Endothelial cell of umbilical vein (primary cell): ENCODE measurements at regions of chr15 and their contacts with region 1.

Region 1: GRCh38 chr15:78979456-78980320 is 34.8 kb upstream of the CTSH start:
- DNase-seq: peak; percentile 60
- H3K4me3 ChIP-seq: no peak overlapping the region
- H3K27ac ChIP-seq: no peak overlapping the region
- H3K4me1 ChIP-seq: no peaks in the 10 kb centered on the region
- H3K27me3 ChIP-seq: peaks cover 0 to 2% of the 10 kb centered on the region in 2 experiments
- CTCF ChIP-seq: peak; percentile 67 to 77
- POLR2A ChIP-seq: no peak

Region 2: DNA sequence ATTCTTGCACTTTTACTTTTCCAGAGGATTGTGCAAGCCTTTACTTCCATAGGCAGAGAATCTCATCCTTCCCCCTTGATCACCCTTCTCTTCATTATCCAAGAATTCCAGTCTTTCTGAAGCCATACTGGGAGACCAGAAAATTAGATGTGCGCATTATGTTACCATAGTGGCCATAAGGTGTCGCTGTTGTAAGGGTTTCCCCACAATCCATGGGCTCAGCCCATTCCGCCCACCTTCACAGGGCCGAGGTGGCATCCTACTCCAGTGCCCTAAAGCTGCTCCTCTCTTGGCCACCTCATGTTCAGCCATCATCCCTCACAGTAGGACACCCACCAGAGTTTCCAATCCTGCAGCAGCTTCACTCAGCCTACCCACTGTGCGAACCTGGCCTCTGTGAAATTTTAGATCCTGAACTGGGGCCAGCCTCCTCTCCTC is 69.9 kb before region 1 on chr15:
- CTCF ChIA-PET with region 1: interaction called, 60 read pairs
- POLR2A ChIA-PET with region 1: no interaction called
- dilution Hi-C with region 1: no loop called
- intact Hi-C with region 1: loop called (anchors 1 kb)
- DNase-seq: peak; percentile 52
- H3K4me3 ChIP-seq: no peak overlapping the region
- H3K27ac ChIP-seq: no peak overlapping the region
- H3K4me1 ChIP-seq: no peaks in the 10 kb centered on the region
- H3K27me3 ChIP-seq: no peaks in the 10 kb centered on the region
- CTCF ChIP-seq: peak; percentile 61 to 65
- POLR2A ChIP-seq: no peak

Region 3: DNA sequence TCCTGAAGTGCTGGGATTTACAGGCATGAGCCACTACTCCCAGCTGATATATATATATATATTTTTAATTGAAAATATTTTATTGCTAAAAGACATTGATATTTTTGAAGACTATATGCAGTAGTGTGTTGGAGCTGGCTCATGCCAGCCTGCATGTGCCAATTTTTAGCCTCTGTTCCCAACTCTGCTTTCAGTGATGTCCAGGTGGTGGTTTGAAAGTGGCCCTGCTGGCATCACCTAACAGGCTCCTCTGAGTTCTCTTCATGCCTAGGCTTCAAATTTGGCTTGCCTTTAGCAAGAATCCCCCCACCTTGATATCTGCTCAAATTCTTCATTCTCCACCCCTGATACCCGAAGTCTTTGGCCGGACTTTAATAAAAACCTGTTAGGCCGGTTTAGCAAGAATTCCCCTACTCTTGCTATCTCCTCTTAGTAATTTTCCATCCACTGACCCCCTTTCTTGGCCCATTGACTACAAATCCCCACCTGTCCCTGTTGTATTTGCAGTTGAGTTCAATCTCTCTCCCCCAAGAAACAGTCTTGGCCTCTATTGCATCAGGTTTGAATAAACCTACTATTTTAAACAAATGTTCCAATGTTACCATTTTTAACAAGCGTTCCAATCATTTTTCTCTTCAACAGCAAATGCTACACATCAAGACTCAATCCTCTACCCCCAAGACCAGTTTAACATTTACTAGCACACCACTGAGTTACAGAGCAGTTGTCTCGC is 11.0 kb before region 1 on chr15:
- CTCF ChIA-PET with region 1: interaction called, 11 read pairs
- POLR2A ChIA-PET with region 1: no interaction called
- dilution Hi-C with region 1: no loop called
- intact Hi-C with region 1: no loop called
- DNase-seq: no peak
- H3K4me3 ChIP-seq: no peak overlapping the region
- H3K27ac ChIP-seq: no peak overlapping the region
- H3K4me1 ChIP-seq: no peaks in the 10 kb centered on the region
- H3K27me3 ChIP-seq: no peaks in the 10 kb centered on the region
- CTCF ChIP-seq: no peak
- POLR2A ChIP-seq: no peak

Region 4: DNA sequence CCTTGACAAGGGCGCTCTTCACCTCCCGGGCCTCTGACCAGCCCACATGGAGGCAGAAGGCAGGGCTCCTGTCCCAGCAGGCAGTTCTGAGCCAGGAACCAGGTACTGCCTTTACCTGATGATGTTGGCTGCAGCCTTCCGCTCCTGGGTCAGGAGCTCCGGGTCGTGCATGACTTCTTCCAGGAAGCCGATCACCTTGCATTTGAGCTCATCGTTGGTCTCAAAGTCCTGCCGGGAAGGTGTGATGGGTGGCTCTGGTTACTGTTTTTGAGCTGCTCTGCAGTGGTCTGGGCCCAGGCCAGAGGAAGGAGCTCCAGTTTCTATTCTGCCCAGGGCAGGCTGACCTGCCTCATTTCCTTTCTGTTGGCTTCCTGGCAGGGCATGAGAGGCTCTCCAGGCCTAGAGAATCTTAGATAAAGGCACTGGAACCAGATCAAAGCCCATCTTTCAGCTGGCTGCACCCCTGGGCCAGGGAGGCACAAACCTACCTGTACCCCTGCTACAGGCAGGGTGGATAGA is 18.4 kb after region 1 on chr15:
- CTCF ChIA-PET with region 1: interaction called, 15 read pairs
- POLR2A ChIA-PET with region 1: no interaction called
- dilution Hi-C with region 1: no loop called
- intact Hi-C with region 1: no loop called
- DNase-seq: no peak
- H3K4me3 ChIP-seq: no peak overlapping the region
- H3K27ac ChIP-seq: no peak overlapping the region
- H3K4me1 ChIP-seq: no peaks in the 10 kb centered on the region
- H3K27me3 ChIP-seq: no peaks in the 10 kb centered on the region
- CTCF ChIP-seq: no peak
- POLR2A ChIP-seq: no peak

Region 5: DNA sequence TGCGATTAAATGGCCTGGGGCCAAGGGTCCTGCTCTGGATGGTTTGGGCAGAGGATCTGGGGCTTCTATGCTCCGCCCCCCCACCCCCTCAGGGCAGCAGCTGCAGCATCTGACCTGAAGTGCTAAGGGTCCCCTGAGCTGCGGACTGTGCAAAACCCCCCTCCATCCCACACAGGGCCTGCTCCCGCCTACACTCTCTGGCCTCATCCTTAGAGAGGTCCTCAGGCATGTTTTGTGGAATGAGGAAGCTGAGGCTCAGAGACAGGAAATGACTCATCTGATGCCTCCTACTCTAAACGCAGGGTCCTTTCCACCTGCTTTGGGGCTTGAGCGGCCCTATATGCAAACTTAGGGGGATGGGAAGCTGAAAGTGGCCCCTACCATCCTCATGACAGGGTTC is 24.6 kb after region 1 on chr15:
- CTCF ChIA-PET with region 1: interaction called, 53 read pairs
- POLR2A ChIA-PET with region 1: no interaction called
- dilution Hi-C with region 1: no loop called
- intact Hi-C with region 1: no loop called
- DNase-seq: peak; percentile 54
- H3K4me3 ChIP-seq: no peak overlapping the region
- H3K27ac ChIP-seq: no peak overlapping the region
- H3K4me1 ChIP-seq: peaks cover 12% of the 10 kb centered on the region
- H3K27me3 ChIP-seq: no peaks in the 10 kb centered on the region
- CTCF ChIP-seq: no peak
- POLR2A ChIP-seq: no peak